Right ventricle myocardium inferior (tissue), 1 donor: ENCODE measurements at regions of chr4 and their contacts with region 1.

Region 1: DNA sequence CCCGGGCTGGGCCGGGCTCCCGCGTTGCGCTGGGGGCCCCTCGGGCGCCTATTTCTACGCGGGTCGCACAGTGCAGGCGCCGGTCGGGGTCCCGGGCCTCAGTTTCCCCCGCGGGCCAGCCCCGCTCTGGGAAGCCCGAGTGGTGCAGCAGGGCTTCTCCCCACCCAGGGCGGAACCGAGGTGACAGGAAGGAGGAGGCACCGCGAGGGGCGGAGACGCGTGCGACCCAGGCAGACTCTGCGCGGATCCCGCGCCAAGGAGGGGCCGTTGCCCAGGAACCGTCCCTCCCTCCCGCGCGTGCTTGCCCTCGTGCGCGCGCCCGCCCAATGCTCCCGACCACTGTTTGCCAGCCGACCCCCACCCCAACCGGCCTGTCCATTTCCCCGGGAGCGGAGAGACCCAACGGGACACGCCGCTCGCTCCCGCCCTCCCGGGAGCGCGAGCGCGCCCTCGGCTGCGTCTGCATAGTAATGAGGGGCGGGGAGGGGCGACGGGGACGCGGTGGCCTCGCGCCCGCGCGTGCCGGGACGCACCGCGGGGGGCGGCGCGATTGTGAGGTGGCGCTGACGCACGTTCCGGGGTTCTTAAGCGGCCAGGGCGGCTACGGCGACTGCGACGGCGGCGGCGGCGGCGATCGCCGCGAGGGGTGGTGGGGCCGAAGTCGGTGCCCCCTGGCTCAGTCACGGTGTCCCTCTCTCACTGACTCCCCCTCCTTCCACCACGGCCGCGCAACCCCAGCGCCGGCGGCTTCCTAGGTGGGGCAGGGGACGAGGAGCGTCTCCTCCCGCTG is at the start of gene CPEB2:
- DNase-seq: peak; percentile 97
- ATAC-seq: peak; percentile 89
- total RNA-seq, gene CPEB2: 23.7 TPM

Region 2: DNA sequence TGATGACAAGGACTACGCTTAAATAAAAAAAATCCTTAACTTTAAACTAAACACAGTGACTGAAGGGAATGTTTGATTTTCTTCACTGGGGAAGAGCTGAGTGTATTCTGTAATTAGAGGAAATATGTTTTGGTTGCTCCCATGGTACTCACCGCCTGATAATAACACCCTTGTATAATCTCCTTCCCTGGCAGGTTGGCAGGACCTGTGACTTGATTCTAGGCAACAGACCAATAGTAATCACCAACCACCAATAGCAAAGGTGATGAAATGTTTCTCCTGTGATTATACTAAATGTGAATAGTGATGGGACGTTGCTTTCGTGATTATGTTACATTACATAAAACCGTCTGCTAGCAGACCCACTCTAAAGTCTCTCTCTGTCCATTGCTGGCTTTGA is 536.6 kb before region 1 on chr4:
- intact Hi-C with region 1: loop called (anchors 10 kb)
- DNase-seq: no peak
- ATAC-seq: peak; percentile 95

Region 3: GRCh38 chr4:14749910-14750309 is 252.2 kb before region 1 on chr4:
- intact Hi-C with region 1: loop called (anchors 5 kb)
- DNase-seq: no peak
- ATAC-seq: peak; percentile 91

Region 4: GRCh38 chr4:14841801-14842768 is 160.0 kb before region 1 on chr4:
- intact Hi-C with region 1: loop called (anchors 1 kb)
- DNase-seq: no peak
- ATAC-seq: peak; percentile 72

Region 5: DNA sequence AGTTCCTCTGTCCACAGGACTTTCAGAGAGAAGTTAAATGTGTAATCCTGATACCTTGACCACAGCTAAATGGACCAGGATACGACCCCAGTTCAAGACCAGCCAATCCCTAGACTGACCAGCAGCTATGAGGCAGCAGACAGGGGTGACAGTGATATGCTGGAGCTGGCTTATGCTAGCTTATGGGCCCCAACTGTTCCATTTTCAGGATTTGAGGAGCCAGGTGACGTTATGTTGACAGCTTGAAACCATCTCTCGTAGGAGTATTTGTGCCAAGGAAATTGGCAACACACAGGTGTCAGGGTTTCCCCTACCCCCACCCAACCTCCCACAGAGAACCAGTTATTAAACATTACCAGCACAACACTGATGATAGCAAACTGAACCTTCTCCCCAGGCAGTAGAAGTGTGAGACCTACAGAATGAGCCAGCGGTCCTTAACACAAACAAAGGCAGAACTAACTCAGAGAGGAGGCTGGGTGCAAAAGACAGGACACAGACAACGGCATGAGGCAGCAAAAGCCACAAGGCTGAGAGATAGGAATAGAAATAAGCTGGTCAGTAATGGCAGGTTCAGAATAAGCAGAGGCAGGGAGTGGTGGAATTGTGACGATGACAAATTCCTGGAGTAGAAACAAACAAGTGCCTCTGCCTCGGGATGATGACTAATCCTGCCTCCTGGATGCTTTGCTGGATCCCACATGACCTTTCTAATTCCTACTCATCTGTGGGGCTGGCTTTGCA is 85.3 kb before region 1 on chr4:
- intact Hi-C with region 1: loop called (anchors 1 kb)
- DNase-seq: no peak
- ATAC-seq: peak; percentile 94

Region 6: DNA sequence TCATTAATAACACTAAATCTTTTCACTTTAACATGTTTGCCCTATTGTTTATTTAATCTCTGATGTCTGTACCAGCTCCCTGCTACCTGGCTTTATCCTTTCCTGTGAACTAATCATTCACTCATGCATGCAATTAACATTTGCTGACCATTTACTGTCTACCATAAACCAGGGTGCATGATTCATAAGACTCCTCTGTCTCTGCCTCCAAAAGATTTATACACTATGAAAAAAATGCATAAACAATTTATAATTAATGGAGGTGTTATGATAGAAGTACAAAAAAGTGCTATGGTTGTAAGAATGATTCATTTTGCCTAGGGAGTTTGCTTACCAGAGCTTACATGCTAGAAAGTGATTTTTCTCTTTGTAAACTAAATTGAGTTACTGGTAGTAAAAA is 24.2 kb before region 1 on chr4:
- intact Hi-C with region 1: no loop called
- DNase-seq: no peak
- ATAC-seq: no peak

Region 7: DNA sequence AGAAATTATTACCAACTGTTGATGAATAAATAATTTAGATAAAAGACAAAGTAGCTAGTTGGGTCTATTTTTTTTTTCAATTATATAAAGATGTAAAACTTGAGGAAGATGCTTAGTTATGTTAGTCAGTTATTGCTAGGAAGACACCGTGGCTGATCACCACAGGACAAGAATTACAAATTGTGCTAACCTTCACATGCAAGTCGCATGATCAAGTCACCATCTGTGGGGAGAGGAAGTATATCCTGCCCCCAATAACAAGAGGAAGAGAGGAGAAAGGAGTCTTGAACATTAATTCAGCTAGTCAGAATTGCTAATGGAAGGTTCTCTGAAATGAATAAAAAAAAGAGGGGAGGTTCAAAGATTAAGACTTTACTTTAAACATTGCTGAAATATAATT is 52.5 kb after region 1 on chr4:
- intact Hi-C with region 1: no loop called
- DNase-seq: no peak
- ATAC-seq: no peak

Region 8: GRCh38 chr4:15144249-15144966 is 142.3 kb after region 1 on chr4:
- intact Hi-C with region 1: loop called (anchors 2 kb)
- DNase-seq: no peak
- ATAC-seq: no peak

Region 9: GRCh38 chr4:15385928-15386327 is 383.9 kb after region 1 on chr4:
- intact Hi-C with region 1: no loop called
- DNase-seq: peak; percentile 67
- ATAC-seq: peak; percentile 89